BJ (cell line): ENCODE measurements at regions of chr17 and their contacts with region 1.

Region 1: GRCh38 chr17:4565209-4566141 is 5.1 kb upstream of the GGT6 start:
- DNase-seq: no peak
- H3K4me3 ChIP-seq: no peak overlapping the region
- H3K27me3 ChIP-seq: peaks cover 7% of the 10 kb centered on the region; the same call in 1 of the 2 replicates
- CTCF ChIP-seq: peak; percentile 94

Region 2: GRCh38 chr17:4263282-4264215 is 301.9 kb before region 1 on chr17 and contains the start of gene ANKFY1:
- CTCF ChIA-PET with region 1: no interaction called
- POLR2A ChIA-PET with region 1: no interaction called
- DNase-seq: peak; percentile 59
- H3K4me3 ChIP-seq: peak within 1 kb of the TSS; percentile 91
- H3K27me3 ChIP-seq: no peaks in the 10 kb centered on the region
- CTCF ChIP-seq: no peak; the same call in 1 of the 2 replicates
- polyA plus RNA-seq, gene ANKFY1: 27.0 and 43.5 TPM in 2 replicates

Region 3: DNA sequence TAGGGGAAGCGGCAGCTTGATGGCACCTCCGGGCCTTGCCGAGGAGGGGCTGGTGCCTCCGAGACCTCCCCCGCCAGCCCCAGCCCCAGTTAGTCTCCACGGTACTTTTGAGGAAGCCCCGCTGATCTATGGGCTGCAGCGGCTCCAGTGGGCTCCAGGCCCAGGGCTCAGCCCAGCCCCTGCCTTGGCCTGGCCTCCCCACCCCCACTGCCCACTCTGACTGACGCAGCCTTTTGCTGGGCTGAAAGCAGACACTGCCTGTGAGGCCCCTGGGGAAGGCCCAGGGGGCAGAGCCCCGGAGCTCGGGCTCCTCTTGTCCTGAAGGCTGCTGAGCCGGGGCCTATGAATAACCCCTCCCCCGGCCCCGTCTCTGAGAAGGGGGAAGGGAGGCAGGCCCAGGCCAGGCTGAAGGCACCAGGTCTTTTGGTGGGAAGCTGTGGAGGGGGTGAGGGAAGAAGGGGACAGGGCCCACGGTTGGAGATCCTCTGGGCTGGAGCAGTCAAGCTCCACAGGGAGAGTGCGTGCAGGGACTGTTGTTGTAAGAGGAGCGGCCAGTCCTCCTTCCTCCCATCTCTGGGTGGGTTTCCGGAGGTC is 11.4 kb after region 1 on chr17:
- CTCF ChIA-PET with region 1: interaction called, 16 read pairs
- POLR2A ChIA-PET with region 1: no interaction called
- DNase-seq: no peak
- H3K4me3 ChIP-seq: no peak overlapping the region
- H3K27me3 ChIP-seq: peaks cover 12% of the 10 kb centered on the region
- CTCF ChIP-seq: no peak

Region 4: DNA sequence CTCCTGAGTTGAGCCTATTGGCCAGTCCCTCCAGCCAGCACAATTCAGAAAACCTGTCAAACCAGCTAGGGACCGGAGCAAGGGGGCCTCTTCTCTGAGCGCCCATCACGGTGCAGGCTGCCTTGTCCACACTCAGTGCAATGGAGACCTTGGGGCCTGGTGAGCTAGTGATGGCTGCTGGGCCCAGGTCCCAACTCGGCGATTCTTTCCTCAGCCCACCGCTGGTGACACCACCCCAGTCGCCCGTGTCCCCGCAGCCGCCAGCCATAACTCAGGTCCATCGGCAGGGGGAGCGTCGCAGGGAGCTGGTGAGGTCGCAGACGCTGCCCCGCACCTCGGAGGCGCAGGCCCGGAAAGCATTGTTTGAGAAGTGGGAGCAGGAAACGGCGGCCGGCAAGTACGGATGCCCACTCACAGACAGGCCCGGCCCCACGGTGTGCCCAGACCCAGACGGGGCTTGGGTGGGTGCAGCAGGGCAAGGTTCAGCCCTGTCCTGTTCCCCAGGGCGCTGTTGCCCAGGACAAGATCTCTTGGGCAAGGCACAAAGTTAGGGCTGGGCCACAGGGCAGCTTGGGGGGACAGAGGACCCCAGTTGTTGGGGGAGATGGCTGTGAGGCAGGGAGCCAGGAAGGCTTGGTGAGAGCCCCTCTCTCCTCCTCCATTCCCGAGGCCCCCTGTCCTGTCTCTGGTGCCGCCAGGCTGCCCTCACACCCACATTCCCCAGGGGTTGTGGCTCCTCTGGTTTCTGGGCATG is 29.6 kb after region 1 on chr17:
- CTCF ChIA-PET with region 1: interaction called, 52 read pairs
- POLR2A ChIA-PET with region 1: no interaction called
- DNase-seq: no peak
- H3K4me3 ChIP-seq: no peak overlapping the region
- H3K27me3 ChIP-seq: peaks cover 13% of the 10 kb centered on the region
- CTCF ChIP-seq: 0 out of 2 replicates have a peak, but pooled peaks have one; percentile 10

Region 5: DNA sequence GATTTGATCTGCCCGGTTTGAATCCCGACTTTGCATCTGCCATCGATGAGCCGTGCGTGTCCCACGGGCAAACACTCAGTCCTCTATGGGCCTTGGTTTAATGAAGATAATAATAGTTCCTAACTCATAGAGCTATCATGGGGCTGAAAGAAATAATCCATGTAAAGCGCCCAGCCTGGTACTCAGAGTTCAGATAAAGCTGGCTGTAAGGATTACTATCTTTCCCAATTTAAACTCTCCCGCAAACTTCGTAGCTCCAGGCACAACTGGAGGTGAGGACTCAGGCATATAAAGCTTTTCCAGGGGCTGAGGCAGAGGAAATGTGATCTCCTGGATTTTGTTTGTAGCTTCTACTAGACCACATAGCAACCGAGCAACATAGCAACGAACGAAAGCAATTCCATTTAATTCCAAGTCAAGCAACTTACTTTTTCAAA is 59.7 kb after region 1 on chr17:
- CTCF ChIA-PET with region 1: interaction called, 122 read pairs
- POLR2A ChIA-PET with region 1: no interaction called
- DNase-seq: no peak
- H3K4me3 ChIP-seq: no peak overlapping the region
- H3K27me3 ChIP-seq: peaks cover 12% of the 10 kb centered on the region
- CTCF ChIP-seq: no peak

Region 6: DNA sequence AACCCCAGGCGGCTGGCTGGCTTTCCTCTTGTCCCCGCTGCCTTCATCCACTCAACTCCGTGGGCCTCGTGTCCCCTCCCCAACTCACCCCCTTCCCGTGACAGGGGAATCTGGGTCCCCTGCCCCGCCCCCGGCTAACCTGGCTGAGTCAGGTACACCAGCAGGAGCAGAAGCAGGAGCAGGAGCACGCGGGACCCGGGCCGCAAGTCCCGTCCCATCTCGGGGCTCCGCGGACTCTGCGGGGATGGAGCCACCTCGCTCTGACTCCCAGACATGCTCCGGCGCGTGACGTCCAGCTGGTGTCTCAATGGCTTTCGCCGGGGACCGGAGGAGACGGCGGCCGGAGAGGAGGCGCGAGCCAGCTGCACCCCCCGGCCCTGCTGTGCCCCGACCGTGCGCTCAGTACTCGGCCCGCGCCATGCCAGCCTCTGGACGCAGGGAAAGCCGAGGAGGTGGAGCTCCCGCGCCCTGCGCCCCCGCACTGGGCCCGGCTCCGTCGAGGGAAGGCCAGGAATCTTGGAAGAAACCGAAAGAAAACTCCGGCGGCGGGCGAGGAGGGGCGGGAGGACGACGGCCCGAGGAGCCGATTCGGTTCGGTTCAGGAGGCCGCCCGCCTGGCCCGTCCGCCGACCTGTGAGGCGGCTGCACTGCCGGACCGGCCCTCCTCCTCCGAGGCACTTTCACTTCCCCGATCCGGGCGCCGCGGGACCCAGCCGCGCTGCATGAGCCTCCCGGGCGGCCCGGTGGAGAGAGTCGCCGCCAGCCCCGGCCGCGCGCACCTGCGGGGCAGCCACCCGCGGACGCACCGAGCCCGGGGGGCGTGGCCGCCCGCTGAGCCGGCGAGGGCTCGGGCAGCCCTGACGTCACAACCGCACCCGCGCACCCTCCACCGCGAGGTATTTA is 173.9 kb after region 1 on chr17 and contains the starts of genes CXCL16 and ZMYND15:
- CTCF ChIA-PET with region 1: no interaction called
- POLR2A ChIA-PET with region 1: no interaction called
- DNase-seq: no peak
- H3K4me3 ChIP-seq: peak within 1 kb of the TSS; percentile 70
- H3K27me3 ChIP-seq: peaks cover 18% of the 10 kb centered on the region
- CTCF ChIP-seq: no peak
- polyA plus RNA-seq, gene CXCL16: 2.2 and 3.3 TPM in 2 replicates
- polyA plus RNA-seq, gene ZMYND15: 0.13 TPM in 1 of 2 replicates, not detected in the other

Region 7: DNA sequence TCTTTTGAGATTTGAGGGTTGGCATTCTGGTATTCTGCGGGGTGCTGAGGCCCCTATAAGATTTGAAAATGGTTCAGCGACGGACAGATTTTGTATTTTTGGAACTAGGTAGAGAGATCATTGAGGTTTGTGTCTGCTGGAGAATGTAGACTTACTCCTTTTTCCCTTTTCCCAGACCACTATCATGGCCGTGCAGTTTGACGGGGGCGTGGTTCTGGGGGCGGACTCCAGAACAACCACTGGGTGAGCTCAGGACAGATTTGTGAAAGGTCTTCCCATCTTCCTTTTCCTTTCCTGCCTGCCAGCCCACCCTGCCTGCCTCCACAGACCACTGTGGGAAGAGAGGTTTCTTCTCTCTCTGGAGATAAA is 231.1 kb after region 1 on chr17:
- CTCF ChIA-PET with region 1: no interaction called
- POLR2A ChIA-PET with region 1: no interaction called
- DNase-seq: no peak
- H3K4me3 ChIP-seq: peak overlapping the region; percentile 95
- H3K27me3 ChIP-seq: no peaks in the 10 kb centered on the region
- CTCF ChIP-seq: no peak

Region 8: DNA sequence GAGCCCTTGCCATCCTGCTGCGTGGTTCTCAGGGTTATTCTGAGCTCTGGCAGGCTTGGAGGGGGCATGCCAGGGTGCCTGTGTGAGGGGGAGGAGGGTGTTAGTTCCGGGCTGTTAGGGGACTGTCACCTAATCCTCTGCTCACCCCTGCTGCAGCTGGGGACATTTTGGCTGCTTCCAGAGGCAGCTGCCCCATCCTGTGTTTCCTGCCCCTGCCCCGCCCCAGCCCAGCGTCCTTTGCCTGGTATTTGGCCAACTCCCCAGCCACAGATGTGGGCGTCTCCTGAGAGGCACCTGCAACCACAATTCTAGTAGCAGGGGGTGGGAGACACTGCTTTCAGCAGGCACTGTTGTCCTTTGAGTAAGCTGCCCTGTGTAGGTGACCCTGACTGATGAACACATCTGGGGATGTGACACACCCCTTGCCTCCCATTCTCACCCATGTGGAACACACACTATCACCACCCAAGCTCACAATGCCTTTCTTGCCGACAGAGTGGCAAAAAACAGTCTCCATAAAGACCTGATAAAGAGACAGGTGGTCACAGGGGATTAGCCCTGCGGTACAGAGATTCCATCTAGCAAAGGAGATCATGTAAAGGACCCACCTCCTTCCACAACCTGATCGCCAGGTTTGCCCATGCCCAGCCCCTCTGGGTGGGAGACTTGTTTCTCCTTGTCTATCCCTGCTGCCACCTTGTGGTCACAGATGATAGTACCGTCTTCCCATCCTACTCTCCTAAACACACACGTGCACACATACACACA is 337.8 kb after region 1 on chr17 and contains the start of gene CHRNE:
- CTCF ChIA-PET with region 1: interaction called, 11 read pairs
- POLR2A ChIA-PET with region 1: no interaction called
- DNase-seq: no peak
- H3K4me3 ChIP-seq: no peak within 1 kb of the TSS
- H3K27me3 ChIP-seq: no peaks in the 10 kb centered on the region
- CTCF ChIP-seq: peak; percentile 82
- polyA plus RNA-seq, gene CHRNE: 0.18 and 0.36 TPM in 2 replicates